SK-N-SH (cell line): ENCODE measurements at regions of chr14 and their contacts with region 1.

Region 1: DNA sequence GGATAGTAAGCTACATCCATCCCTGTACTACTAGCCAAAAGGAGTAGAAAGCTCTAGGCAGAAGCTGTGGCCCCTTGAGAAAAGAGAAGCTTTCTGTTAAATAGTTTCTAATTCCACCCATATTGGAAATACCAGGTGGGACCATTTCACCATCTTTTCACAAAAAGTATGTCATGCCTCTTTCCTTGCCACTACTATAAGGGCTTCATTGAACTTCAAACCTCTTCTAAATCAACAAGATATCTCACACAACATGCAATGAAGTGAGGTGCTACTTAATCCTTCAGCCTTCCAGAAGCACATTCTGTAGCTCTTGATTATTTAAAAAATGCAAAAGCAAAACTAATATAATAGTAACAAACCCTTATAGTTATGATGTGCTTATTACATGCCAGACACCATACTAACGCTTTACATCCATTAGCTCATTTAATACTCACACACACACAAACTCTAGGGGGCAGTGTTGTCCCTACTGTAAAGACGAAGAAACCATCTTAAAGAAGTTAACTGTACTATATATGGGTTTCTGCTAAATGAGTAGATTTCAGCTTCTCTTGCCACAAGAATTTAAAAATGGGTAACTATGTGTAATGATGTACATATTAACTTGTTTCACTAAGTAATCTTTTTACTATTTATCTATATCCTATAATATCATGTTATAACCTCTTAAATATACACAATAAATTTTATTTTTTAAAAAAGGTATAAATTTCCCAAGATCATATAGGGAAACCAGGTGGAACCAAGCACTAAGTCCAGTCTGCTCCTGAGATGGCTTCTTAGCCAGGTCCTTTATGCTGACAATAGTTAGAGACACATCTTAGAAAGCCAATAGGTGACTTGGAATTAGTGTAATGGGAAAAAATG is 124.4 kb downstream of the RPS29 start:
- DNase-seq: peak; percentile 33
- H3K4me3 ChIP-seq: no peak overlapping the region; a peak in 1 of 4 replicates
- H3K27ac ChIP-seq: no peak overlapping the region
- H3K4me1 ChIP-seq: no peaks in the 10 kb centered on the region
- H3K27me3 ChIP-seq: no peaks in the 10 kb centered on the region
- CTCF ChIP-seq: peak; percentile 85
- EP300 ChIP-seq: no peak
- RAD21 ChIP-seq: peak; percentile 82

Region 2: GRCh38 chr14:49438256-49438770 is 23.5 kb before region 1 on chr14:
- CTCF ChIA-PET with region 1: interaction called, 80 read pairs
- POLR2A ChIA-PET with region 1: no interaction called
- DNase-seq: no peak
- H3K4me3 ChIP-seq: no peak overlapping the region
- H3K27ac ChIP-seq: no peak overlapping the region
- H3K4me1 ChIP-seq: no peaks in the 10 kb centered on the region
- H3K27me3 ChIP-seq: no peaks in the 10 kb centered on the region
- CTCF ChIP-seq: no peak
- EP300 ChIP-seq: no peak
- RAD21 ChIP-seq: no peak

Region 3: GRCh38 chr14:49483268-49483667 is 21.5 kb after region 1 on chr14:
- CTCF ChIA-PET with region 1: interaction called, 73 read pairs
- POLR2A ChIA-PET with region 1: no interaction called
- DNase-seq: peak; percentile 31
- H3K4me3 ChIP-seq: no peak overlapping the region
- H3K27ac ChIP-seq: peak overlapping the region in 1 of 2 experiments; percentile 60; a peak in 2 of 4 replicates
- H3K4me1 ChIP-seq: peaks cover 0 to 8% of the 10 kb centered on the region in 2 experiments; a peak in 2 of 4 replicates
- H3K27me3 ChIP-seq: no peaks in the 10 kb centered on the region; the same call in 1 of the 2 replicates
- CTCF ChIP-seq: no peak
- EP300 ChIP-seq: no peak
- RAD21 ChIP-seq: no peak

Region 4: DNA sequence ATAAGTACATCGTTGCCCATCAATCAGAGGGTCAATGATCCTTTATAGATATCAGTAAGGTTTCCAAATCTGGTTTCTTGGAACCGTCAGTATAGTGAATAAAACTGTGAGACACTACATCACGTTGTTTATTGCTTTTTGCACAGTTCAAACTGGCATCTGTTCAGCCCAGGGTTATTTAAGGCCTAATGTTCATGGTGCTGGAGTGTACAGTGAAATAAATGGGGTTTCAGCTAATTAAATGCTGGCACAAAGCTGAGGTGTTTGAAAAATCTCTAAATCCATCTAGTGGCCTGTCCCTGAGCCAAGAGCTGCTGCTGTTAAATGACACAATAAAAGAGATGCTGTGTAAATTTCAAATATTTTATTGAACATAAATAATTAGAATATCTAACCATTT is 54.5 kb after region 1 on chr14:
- CTCF ChIA-PET with region 1: interaction called, 10 read pairs
- POLR2A ChIA-PET with region 1: no interaction called
- DNase-seq: no peak
- H3K4me3 ChIP-seq: no peak overlapping the region
- H3K27ac ChIP-seq: no peak overlapping the region
- H3K4me1 ChIP-seq: no peaks in the 10 kb centered on the region
- H3K27me3 ChIP-seq: no peaks in the 10 kb centered on the region; the same call in 1 of the 2 replicates
- CTCF ChIP-seq: no peak
- EP300 ChIP-seq: no peak
- RAD21 ChIP-seq: no peak

Region 5: DNA sequence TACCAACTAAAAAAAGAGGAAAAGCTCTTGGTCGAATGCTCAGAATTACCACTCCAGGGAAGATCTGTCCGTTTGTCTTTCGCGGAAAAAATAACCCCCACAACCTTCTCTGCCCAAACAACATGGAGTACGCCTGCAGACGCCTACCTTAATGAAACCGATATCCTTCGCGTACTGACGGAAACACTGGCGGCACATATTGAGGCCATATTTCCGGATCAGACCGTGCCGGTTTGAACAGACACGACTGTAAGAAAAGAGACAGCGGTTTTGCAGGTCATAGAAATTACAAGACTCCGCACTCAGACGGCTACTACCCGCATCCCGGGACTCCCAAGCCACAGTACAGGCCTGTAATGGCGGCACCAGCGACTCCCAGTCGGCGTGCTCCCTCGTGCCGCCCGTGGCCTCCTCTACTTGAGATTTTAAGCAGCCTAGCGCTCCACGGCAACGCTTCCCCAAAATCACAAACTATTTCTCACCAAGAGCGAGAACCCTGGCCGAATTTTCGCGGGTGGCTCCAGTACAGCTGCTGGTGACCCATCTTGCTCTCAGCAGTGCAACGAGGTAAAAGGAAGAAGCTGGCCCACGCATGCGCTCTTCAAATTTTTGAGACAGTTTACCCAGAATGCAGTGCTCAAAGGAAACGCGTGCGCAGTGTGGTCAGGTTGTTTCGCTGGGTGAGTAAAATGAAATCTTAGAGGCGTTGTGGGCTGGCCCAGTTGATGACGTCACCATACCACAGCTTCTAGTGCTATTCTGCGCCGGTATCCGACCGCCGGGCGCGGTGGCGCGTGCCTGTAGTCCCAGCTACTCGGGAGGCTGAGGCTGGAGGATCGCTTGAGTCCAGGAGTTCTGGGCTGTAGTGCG is 124.3 kb after region 1 on chr14 and contains the start of gene RPS29:
- CTCF ChIA-PET with region 1: interaction called, 18 read pairs
- POLR2A ChIA-PET with region 1: no interaction called
- DNase-seq: peak; percentile 89
- H3K4me3 ChIP-seq: peak within 1 kb of the TSS; percentile 72 to 91
- H3K27ac ChIP-seq: peak within 1 kb of the TSS; percentile 82 to 84
- H3K4me1 ChIP-seq: peaks cover 3 to 7% of the 10 kb centered on the region in 2 experiments; a peak in 1 of 4 replicates
- H3K27me3 ChIP-seq: no peaks in the 10 kb centered on the region
- CTCF ChIP-seq: no peak
- EP300 ChIP-seq: peak in 1 of 2 experiments; percentile 28; a peak in 1 of 4 replicates
- RAD21 ChIP-seq: no peak
- polyA plus RNA-seq, gene RPS29: 11,220 and 15,074 TPM in 2 replicates